ENCODE measurements at regions of chr20 and their contacts with region 1.

Region 1: DNA sequence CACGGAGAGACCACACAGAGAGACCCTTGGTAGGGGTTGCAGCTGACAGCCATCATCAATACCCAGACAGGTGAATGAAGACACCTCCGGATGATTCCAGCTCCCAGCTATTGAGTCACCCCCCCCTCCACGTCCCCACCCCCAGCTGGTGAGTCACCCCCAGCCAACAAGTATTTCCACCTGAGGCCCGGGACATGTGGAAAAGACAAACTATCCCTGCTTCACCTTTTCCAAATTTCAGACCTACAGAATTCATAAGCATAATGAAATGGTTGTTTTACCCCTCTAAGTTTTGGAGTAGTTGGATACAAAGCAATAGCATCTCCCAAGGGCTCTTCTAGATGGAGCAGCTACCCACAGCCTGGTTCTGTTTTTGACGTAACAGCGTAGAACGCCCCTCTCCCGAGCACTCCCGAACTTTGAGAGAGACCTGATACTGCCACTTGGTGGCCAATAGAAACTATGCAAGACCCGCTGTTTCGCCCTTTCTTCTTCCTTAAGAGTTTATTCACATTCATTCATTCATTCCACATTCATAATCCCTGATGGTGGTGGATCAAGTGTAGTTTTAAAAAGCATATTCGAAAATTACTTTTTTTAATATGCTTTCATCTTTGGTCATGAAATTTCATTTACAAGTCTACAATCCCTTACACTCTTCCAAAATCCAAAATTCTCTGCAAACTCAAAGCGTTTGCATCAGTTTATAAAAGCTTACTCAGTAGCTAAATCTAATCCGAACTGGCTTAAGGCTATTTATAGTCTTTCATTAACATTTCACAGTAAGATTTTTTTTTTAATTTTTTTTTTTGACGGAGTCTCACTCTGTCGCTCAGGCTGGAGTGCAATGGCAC is 15.1 kb upstream of the PPP1R16B start:
- DNase-seq: no peak
- CTCF ChIP-seq: peak; percentile 58

Region 2: GRCh38 chr20:38590676-38591471 is 199.6 kb before region 1 on chr20:
- CTCF ChIA-PET with region 1: no interaction called
- POLR2A ChIA-PET with region 1: no interaction called
- DNase-seq: peak; percentile 5
- CTCF ChIP-seq: no peak

Region 3: GRCh38 chr20:38645980-38646858 is 144.2 kb before region 1 on chr20:
- CTCF ChIA-PET with region 1: interaction called, 11 read pairs
- POLR2A ChIA-PET with region 1: no interaction called
- DNase-seq: peak; percentile 92
- CTCF ChIP-seq: peak; percentile 99

Region 4: DNA sequence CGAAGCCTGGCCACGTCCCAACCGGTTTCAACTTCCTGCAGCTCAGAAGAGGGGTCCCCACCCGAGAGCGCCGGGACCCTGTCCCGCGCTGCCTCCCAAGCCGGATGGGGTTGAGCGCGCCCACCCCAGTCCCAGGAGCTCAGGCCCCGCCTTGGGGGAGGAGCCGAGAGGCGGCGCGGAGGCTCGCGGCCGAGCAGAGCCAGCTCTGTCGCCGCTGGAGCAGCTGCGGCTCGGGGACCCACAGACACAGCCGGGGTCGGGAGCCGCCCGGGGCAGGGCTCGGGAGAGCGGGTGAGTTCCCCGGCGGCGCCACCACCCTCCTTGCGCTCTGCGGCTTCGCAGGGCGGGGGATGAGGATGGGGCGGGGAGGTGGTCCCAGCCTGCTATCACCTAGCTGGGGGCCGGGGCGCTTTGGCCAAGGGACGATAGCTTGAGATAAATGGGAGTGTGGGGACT is 15.1 kb after region 1 on chr20 and contains the start of gene PPP1R16B:
- CTCF ChIA-PET with region 1: interaction called, 50 read pairs
- POLR2A ChIA-PET with region 1: no interaction called
- DNase-seq: peak; percentile 87
- CTCF ChIP-seq: no peak

Region 5: GRCh38 chr20:38833857-38834164 is 43.4 kb after region 1 on chr20:
- CTCF ChIA-PET with region 1: interaction called, 12 read pairs
- POLR2A ChIA-PET with region 1: no interaction called
- DNase-seq: peak; percentile 36
- CTCF ChIP-seq: no peak

Measured in GM10248 (cell line).